CD4-positive, alpha-beta T cell (primary cell): ENCODE measurements at regions of chr11 and their contacts with region 1.

Region 1: DNA sequence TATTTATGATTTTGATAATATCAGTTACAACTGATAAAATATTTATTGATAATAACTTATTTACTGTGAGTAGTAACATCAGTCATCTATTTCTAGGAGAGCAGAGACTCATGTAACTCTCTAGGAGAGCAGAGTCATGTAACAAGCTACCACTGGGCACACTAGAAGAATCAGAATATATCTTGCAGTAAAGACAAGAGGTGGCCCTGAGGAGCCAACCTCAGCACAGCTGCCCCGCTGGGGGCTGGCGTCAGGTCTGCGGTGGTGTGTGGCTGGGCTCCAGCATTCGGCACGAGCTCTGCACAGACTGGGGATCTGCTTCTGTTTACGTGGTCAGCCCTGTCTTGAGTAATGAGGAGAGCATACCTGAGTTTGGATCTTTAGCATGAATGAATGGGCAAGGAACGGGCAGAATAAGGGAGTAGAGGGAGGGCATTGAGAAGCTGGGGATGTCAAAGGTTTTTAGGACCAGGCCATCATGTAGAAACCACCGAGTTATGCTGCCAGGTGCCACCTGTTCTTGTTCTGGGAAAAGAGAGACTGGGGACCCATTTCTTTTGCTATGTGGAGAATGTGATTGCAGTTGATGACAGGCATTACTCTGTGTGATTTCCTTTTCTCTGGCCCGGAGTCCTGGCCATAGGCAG is 51.1 kb upstream of the HEPHL1 start:
- DNase-seq: no peak
- ATAC-seq: no peak
- H3K4me3 ChIP-seq: no peak overlapping the region
- H3K4me3 Mint-ChIP-seq: no peak overlapping the region
- H3K27ac ChIP-seq: no peak overlapping the region
- H3K27ac Mint-ChIP-seq: no peak overlapping the region
- H3K4me1 ChIP-seq: no peaks in the 10 kb centered on the region
- H3K4me1 Mint-ChIP-seq: no peaks in the 10 kb centered on the region
- H3K27me3 ChIP-seq: no peaks in the 10 kb centered on the region
- H3K27me3 Mint-ChIP-seq: peaks cover 27% of the 10 kb centered on the region
- CTCF ChIP-seq: no peak

Region 2: GRCh38 chr11:93958991-93959390 is 11.1 kb before region 1 on chr11:
- CTCF ChIA-PET with region 1: no interaction called
- POLR2A ChIA-PET with region 1: no interaction called
- intact Hi-C with region 1: loop called (anchors 1 kb)
- DNase-seq: no peak
- ATAC-seq: no peak
- H3K4me3 ChIP-seq: no peak overlapping the region
- H3K4me3 Mint-ChIP-seq: no peak overlapping the region
- H3K27ac ChIP-seq: no peak overlapping the region
- H3K27ac Mint-ChIP-seq: no peak overlapping the region
- H3K4me1 ChIP-seq: no peaks in the 10 kb centered on the region
- H3K4me1 Mint-ChIP-seq: no peaks in the 10 kb centered on the region
- H3K27me3 ChIP-seq: no peaks in the 10 kb centered on the region
- H3K27me3 Mint-ChIP-seq: peaks cover 13% of the 10 kb centered on the region
- CTCF ChIP-seq: no peak